ENCODE measurements at regions of chr6 and their contacts with region 1.

Region 1: GRCh38 chr6:111210194-111210728 is 123.0 kb downstream of the SLC16A10 start:
- DNase-seq: no peak
- ATAC-seq: peak; percentile 89
- H3K4me3 Mint-ChIP-seq: no peak overlapping the region
- H3K27ac Mint-ChIP-seq: peak overlapping the region; percentile 85
- H3K4me1 Mint-ChIP-seq: peaks cover 8% of the 10 kb centered on the region
- H3K27me3 Mint-ChIP-seq: no peaks in the 10 kb centered on the region
- CTCF ChIP-seq: peak; percentile 49

Region 2: GRCh38 chr6:111011360-111012142 is 198.7 kb before region 1 on chr6:
- CTCF ChIA-PET with region 1: interaction called, 15 read pairs
- POLR2A ChIA-PET with region 1: no interaction called
- DNase-seq: no peak
- ATAC-seq: peak; percentile 73
- H3K4me3 Mint-ChIP-seq: no peak overlapping the region
- H3K27ac Mint-ChIP-seq: no peak overlapping the region
- H3K4me1 Mint-ChIP-seq: no peaks in the 10 kb centered on the region
- H3K27me3 Mint-ChIP-seq: no peaks in the 10 kb centered on the region
- CTCF ChIP-seq: no peak

Region 3: GRCh38 chr6:111030008-111031007 is 180.0 kb before region 1 on chr6:
- CTCF ChIA-PET with region 1: interaction called, 14 read pairs
- POLR2A ChIA-PET with region 1: no interaction called
- DNase-seq: no peak
- ATAC-seq: no peak
- H3K4me3 Mint-ChIP-seq: no peak overlapping the region
- H3K27ac Mint-ChIP-seq: peak overlapping the region; percentile 7; the same call in 1 of the 2 replicates
- H3K4me1 Mint-ChIP-seq: peaks cover 43% of the 10 kb centered on the region
- H3K27me3 Mint-ChIP-seq: no peaks in the 10 kb centered on the region
- CTCF ChIP-seq: no peak

Region 4: DNA sequence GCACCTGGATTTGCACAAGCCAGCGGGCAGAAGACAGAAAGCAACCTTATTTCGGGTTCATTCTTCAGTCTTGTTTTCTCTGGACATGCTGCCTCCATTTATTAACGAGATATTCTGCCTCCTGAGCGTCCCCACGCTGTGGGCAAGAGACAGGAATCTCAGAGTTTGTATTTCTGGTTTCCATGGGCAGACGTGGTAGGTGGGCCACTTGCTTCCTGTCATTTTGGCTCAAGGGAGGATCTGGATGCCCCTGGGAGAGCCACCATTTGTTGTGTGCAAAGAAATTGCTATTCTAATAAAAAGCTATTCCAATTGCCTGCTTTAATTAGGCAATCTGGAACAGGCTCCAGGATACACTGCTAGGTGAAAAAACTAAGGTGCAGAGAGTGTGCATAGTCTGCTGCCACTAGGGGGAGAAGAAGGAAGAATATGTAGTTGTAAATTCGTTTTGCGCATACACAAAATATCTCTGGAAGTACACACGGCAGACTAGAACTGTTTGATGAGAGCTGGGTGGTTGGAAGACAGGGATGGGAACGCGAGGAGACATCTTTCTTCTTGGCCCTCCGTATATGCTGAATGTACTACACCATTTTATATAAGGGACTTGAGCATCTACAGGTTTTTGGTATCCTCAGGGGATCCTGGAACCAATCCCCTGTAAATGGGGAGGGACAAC is 153.0 kb before region 1 on chr6:
- CTCF ChIA-PET with region 1: interaction called, 17 read pairs
- POLR2A ChIA-PET with region 1: no interaction called
- DNase-seq: no peak
- ATAC-seq: peak; percentile 80
- H3K4me3 Mint-ChIP-seq: no peak overlapping the region
- H3K27ac Mint-ChIP-seq: no peak overlapping the region
- H3K4me1 Mint-ChIP-seq: peaks cover 6% of the 10 kb centered on the region
- H3K27me3 Mint-ChIP-seq: no peaks in the 10 kb centered on the region
- CTCF ChIP-seq: peak; percentile 77

Region 5: DNA sequence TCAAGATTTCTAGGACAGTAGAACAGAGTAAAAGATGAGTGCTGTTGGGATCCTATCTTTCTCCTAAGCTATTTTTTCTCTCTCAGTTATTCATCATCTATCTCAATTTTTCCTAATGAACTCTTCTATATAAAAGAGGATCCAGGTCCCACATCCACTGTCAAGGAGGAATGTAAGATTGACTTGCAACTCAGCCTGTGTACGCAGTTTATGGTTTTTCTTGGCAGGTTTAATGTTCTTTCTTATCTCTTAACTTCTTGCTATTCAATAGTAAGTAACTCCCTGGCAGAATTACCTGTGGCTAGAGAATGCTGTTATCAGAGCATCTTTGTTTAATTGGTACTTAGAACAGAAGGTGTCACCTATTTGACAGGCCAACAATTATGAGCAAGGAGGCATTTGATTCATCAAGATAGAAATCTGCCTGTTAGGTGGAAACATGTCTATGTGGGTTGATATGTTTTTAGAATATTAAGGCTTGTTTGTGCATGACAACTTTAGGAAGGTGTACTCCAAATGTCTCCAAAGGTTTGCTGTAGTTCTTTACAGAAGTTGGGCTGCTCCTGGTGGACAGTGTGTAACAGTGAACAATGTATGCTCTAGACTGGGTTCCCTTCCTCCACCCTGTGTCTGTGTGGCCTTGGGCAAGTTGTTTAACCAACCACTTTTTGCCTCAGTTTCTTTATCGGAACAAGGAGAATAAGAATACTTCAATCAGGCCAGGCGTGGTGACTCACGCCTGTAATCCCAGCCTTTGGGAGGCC is 62.0 kb before region 1 on chr6:
- CTCF ChIA-PET with region 1: no interaction called
- POLR2A ChIA-PET with region 1: no interaction called
- DNase-seq: no peak
- ATAC-seq: no peak
- H3K4me3 Mint-ChIP-seq: no peak overlapping the region
- H3K27ac Mint-ChIP-seq: no peak overlapping the region
- H3K4me1 Mint-ChIP-seq: no peaks in the 10 kb centered on the region
- H3K27me3 Mint-ChIP-seq: no peaks in the 10 kb centered on the region
- CTCF ChIP-seq: no peak

Region 6: GRCh38 chr6:111322153-111322552 is 111.9 kb after region 1 on chr6:
- CTCF ChIA-PET with region 1: no interaction called
- POLR2A ChIA-PET with region 1: no interaction called
- DNase-seq: no peak
- ATAC-seq: no peak
- H3K4me3 Mint-ChIP-seq: no peak overlapping the region
- H3K27ac Mint-ChIP-seq: no peak overlapping the region
- H3K4me1 Mint-ChIP-seq: no peaks in the 10 kb centered on the region
- H3K27me3 Mint-ChIP-seq: no peaks in the 10 kb centered on the region
- CTCF ChIP-seq: no peak

Measured in WTC11 (cell line).